Cardiac septum (tissue), 1 donor: ENCODE measurements at regions of chr4 and their contacts with region 1.

Region 1: DNA sequence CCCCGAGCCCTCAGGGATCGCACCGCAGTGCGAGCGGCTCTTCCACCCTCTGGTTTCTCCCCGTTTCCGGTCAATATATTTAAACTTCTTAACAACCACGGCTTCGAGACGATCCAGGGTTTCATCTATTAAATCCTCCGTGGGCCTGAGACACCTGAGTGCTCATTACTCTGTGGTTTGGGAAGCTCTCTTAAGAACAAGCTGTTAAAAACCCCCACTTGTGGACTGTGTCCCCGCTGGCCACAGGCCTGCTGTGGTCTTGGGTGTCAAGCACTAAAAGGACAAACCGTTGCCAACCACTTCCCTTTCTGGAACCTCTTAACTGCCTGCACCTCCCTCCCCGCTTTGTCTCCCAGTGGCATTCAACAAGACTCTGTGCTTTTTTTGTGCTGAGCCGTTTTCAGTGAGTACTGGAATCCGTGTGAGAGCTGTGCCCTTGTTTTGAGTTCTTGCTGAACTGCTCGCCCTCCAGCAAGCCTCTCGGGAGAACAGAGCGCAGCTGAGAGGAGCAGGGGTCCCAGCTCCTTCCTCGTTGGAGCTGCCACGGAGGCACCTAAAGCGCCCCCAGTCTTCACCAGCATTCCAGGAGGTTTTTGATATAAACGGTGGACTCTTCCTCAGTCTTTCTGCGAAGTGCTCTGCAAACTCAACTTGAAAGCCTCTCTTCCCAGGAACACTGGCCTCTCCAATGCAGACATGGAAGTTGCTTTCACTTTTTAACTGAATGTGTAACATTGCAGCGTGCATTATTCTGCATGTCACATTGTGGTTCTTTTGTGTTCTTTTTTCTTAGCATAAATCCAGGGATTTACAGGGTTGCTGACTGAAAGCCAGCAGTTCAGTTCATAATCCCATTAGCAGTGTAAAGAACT is 691 bp upstream of the IGFBP7 start:
- DNase-seq: peak; percentile 80

Region 2: DNA sequence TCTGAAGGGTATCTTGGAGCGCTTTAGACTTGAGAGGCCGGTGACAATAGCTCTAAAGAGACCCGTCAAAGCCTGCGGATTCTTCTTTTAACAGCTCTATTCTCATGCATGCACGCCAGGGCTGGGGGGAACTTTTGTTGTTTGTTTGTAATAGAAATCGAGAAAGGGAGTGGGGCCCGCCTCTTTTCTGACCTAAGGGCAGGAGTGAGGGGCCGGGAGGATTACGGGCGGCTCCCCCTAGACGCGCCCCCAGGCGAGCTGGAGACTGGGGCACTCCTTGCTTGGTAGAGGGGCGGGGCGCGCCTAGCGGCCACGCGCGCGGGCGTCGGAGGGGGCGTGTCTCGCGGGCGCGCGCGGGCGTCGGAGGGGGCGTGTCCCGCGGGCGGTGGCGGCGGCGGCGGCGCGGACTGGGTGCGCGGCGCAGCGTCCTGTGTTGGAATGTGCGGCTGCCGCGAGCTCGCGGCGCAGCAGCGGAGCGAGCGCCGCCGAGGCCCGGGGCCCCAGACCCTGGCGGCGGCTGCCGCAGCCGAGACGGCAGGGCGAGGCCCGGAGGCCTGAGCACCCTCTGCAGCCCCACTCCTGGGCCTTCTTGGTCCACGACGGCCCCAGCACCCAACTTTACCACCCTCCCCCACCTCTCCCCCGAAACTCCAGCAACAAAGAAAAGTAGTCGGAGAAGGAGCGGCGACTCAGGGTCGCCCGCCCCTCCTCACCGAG is 203.2 kb before region 1 on chr4 and contains the start of gene REST:
- intact Hi-C with region 1: loop called (anchors 2 kb)
- DNase-seq: peak; percentile 91
- total RNA-seq, gene REST: 33.9 TPM

Region 3: DNA sequence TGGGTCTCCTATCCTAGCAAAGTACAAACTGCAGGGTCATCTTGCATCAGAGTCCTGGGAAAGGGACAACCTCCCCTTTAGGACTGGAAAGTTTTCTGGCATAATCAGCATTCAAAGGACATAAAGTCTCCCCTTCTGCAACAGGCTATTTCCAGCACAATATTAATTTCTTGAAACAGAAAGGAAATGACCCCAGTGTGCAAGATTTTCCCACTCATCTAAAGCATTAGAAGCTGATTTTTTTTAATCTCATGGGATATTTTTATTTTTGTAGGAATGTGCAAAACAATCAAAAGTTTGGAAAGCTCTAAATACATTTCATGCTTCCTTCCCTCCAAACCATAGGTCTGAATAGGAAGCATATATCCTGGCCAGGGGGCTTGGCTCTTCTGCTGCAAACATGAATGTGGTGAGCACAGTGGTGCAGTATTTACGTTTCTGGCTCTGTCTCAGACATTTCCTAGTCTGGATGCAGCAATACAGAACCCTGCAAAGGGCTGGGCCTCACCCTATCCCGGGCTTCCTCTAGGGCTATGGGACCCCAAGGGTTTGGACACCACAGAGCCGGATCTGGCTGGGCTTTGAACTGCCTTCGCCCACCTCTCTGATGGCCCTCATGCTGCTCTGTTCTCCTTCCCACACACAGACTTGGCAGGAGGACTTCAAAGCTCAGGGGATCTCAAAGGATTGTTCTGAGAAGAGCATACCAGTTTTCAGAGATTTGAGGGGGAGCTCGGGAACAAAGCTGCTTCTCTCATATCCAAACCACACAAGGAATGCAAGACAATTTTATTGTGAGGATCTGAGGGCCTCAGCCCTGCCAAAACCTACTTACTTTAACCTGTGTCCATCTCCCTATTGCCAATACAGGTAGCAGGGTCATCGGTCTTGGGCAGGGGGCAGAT is 67.3 kb before region 1 on chr4:
- intact Hi-C with region 1: loop called (anchors 2 kb)
- DNase-seq: no peak

Region 4: GRCh38 chr4:57080781-57081650 is 29.9 kb before region 1 on chr4:
- intact Hi-C with region 1: loop called (anchors 2 kb)
- DNase-seq: no peak

Region 5: GRCh38 chr4:57091657-57092162 is 19.2 kb before region 1 on chr4:
- intact Hi-C with region 1: no loop called
- DNase-seq: no peak

Region 6: DNA sequence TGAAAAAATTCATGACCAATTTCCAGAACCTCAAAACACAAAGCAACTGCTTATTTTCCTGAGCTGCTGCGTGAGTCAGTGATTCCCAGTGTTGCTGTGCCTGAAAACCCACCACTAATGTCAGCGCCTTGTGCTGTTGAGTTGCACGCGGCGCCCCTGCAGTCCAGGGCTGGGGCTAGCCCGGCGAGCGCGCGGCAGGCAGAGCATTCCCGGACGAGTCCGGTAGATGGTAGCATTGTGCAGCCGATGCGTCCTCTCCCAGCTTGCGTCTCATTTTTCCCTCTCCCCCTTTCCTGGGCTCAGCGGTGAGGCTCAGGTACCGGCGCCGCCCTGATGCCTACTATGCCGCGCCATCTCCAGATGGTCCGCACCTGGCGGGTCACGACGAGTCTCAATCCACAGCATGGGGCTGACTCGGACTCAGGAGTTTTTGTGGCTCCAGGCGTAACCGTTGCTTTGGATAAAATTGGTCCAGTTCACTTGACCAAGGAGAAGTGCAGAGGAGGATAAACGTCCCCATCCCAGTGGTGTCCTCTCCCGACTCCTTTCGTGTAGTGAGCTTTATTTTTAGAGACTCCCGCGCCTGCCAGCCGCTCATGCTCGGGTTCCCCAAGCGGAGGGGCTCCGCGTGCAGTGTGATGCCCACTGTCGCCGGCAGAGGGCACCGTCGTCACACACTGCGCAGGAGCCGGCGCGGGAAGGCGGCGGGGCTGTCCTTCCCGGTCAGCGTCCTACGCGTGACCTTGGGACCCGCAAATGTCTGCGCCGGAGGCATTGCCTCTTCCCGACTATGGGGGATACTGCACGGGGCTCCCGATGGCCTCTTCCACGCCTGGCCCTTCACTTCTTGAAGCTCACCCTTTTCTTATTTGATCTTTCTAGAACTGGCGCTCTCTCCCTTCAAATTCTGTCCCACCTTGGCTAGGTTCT is 52.9 kb after region 1 on chr4:
- intact Hi-C with region 1: loop called (anchors 2 kb)
- DNase-seq: peak; percentile 91

Region 7: DNA sequence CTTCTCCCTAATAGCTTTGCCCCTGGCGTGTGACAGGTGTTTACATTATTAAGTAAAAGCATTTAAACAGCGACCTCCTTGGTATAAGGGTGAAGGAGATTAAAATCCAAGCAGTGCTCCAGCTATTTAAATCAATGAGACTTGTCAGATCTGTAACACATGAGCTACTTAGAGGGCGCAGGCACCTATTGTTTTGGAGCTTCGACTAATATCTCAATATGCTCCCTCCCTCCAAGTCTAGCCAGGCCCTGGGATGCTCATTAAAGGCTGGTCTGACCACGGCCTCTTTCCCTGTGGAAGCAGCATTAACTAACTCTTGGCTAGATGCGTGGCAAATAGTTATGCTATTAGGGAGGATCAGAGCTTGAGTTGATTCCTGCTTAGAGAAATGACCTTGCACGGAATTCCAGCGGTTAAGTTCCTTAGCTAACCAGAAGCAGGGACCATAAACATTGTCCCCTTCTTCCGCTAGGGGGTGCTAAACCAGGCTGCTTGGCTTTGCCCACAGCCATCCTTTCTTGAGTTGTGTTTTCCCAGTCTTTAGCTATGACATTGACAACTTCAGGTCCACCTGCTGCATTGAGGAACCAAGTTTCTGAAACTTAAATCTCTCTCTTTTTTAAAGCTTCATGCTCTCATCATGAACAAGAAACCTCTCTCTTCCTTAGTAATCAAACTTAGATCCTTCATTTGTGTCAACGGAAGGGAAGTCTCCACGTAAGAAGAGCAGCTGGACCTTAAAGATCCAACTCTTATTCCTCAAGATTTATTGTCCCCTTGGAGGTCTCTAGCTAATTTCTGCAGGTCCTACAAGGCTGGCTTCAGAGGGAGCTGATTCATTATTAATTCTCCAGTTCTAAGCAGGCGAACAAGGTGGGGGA is 80.0 kb after region 1 on chr4:
- intact Hi-C with region 1: no loop called
- DNase-seq: no peak

Region 8: GRCh38 chr4:57200928-57201327 is 90.1 kb after region 1 on chr4:
- intact Hi-C with region 1: no loop called
- DNase-seq: no peak